Cardiac septum (tissue), 1 donor: ENCODE measurements at regions of chr9 and their contacts with region 1.

Region 1: DNA sequence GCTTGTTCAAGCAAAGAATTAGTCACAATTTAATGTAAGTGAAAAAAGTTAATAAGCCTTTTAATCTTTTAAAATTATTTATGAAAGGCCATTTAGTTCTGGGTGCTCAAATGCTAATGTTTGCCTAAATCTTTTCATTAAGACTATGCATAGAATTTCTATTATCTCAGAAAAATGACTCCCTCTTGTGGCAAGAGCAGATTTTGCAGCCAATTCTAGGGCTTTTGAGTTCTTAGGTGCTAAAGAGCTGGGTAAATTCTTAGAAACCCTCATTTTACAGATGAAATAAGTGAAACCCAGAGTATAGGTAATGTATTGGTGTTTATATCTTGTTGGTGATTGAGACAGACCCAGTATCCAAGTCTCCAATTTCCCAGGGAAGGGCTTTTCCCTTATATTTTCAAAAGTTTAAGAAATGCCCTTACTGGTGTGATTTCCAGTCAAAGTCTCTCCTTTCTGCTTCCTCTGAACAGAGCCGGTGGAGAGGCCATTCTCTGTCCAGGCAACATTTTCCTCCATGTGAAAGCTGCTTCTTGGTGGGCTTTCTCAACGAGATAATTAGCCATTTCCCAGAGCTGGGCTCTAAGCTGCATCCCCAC is 24.1 kb upstream of the PCSK5 start:
- DNase-seq: no peak

Region 2: DNA sequence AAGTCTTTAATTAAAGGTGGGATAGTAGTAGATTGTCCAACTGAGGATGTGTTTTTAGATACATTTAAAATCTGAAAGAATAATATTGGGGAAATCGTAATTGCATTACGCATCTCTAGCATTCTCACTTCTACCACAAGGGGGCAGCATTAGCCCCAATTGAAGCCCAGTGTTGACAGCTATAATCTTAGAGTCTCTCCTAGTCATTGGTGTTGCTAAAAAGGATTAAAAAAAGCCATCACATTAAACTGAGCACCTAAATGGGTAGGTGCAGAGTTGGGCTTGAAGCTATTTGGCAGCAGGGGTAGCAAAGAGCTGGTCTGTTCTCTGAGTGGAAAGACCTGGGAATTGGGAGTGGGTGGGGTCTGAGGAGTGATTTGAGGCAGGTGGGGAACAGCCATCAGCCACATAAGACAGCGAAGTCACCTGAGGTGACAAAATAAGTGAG is 600.8 kb before region 1 on chr9:
- intact Hi-C with region 1: loop called (anchors 5 kb)
- DNase-seq: no peak

Region 3: GRCh38 chr9:75333624-75334023 is 532.7 kb before region 1 on chr9:
- intact Hi-C with region 1: loop called (anchors 10 kb)
- DNase-seq: no peak

Region 4: DNA sequence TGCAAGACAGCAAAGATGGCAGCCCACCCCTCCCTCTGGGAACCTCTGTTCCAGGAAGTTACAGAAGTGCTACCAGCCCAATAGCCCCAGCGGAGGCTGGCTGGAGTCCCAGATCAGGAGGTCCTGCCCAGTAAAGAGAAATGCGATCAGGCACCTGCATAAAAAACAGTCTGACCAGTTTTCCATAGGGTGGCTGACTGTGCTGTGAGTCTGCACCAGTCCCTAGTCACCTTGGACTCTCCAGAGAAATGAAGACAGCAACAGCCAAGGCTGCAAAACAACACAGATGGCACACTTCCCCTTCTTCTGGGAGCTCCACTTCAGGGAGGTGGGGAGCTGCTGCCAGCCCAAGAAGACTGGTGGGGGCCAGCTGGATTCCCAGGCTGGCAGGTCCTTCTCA is 241.4 kb before region 1 on chr9:
- intact Hi-C with region 1: loop called (anchors 5 kb)
- DNase-seq: no peak

Region 5: DNA sequence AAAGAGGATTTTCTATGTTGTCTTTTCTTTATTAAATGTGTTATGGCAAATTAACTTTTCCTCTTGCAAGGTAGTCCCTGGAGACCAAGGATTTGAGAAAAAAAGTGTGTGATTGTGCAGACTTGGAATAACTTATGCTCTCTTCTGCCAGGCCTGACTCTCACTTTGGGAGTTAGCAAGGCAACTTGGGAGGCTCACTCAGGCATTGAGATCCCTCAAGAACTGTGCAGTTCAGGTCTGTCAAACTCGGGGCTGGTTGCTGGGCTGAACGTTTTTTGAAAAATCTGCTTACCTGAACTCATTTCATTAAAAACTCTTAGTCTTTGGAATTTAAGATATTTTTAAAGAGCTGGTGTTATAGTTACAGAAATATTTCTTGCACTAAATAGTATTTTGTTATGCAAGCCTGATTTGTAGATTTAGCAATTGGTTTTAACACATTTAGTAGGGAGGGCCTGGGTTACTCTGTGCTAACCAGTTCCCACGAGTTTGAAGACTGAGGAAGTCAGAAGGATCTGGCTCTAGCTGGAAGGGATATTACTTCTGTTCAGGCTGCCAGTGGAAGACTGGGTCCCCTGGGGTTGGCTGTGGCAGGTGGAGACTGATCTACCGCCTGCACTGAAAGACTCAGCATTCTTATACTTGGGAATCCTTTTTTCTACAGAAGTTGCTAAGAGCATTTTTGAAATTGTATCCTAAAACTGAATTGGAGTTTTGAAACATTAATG is 126.3 kb before region 1 on chr9:
- intact Hi-C with region 1: no loop called
- DNase-seq: no peak